PC-9 (cell line): ENCODE measurements at regions of chr2 and their contacts with region 1.

Region 1: DNA sequence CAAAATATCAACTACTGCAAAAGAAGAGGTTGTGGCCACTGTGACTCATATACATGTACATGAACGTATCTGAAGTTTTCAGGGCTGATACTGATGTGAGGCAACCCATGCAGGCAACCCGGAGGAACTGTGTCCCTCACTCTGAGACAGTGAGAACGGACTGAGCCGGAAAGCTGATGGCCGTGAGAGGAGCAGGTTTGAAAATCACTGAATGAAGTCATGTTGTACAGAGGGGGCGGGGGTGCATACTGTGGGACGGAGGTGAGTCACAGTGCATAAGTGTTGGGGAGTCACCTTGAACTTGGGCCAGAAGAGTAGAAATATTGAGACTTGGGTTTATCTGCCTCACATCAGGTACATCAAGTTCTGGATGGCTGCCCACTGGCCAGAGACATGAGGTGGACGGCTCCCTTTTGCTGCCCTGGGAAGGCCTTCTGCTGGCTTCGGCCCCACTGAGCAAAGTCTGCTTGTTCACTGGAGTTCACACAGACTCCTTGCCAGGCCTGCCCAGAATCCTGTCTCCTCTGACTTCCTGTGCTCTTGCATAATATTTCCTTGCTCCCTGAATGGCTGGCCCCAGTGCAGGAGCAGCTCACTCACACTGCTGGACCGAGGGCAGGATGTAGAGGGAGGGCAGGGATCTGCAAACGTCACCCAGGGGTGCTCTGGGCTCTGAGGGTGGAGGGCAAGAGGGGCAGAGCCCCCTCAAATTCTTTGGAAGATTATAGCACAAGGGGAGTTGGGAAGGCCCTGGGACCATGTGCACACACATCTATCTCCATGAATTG is 18.1 kb downstream of the EPAS1 start:
- DNase-seq: peak; percentile 93 to 98
- H3K4me3 ChIP-seq: peak overlapping the region; percentile 22; the same call in 1 of the 2 replicates
- H3K27ac ChIP-seq: peak overlapping the region; percentile 76
- H3K4me1 ChIP-seq: peaks cover 93% of the 10 kb centered on the region
- H3K27me3 ChIP-seq: no peaks in the 10 kb centered on the region
- CTCF ChIP-seq: no peak

Region 2: GRCh38 chr2:46325178-46325928 is 10.1 kb after region 1 on chr2:
- CTCF ChIA-PET with region 1: no interaction called
- POLR2A ChIA-PET with region 1: interaction called, 9 read pairs
- intact Hi-C with region 1: loop called (anchors 1 kb)
- DNase-seq: peak; percentile 63 to 71
- H3K4me3 ChIP-seq: no peak overlapping the region
- H3K27ac ChIP-seq: peak overlapping the region; percentile 48; the same call in 1 of the 2 replicates
- H3K4me1 ChIP-seq: peaks cover 63% of the 10 kb centered on the region
- H3K27me3 ChIP-seq: no peaks in the 10 kb centered on the region
- CTCF ChIP-seq: no peak

Region 3: GRCh38 chr2:46431481-46432205 is 116.3 kb after region 1 on chr2:
- CTCF ChIA-PET with region 1: no interaction called
- POLR2A ChIA-PET with region 1: no interaction called
- intact Hi-C with region 1: no loop called
- DNase-seq: no peak
- H3K4me3 ChIP-seq: no peak overlapping the region
- H3K27ac ChIP-seq: no peak overlapping the region
- H3K4me1 ChIP-seq: 0 out of 2 replicates have a peak, but pooled peaks cover 11% of the 10 kb centered on the region
- H3K27me3 ChIP-seq: no peaks in the 10 kb centered on the region
- CTCF ChIP-seq: no peak